PC-9 (cell line): ENCODE measurements at regions of chr7 and their contacts with region 1.

Region 1: DNA sequence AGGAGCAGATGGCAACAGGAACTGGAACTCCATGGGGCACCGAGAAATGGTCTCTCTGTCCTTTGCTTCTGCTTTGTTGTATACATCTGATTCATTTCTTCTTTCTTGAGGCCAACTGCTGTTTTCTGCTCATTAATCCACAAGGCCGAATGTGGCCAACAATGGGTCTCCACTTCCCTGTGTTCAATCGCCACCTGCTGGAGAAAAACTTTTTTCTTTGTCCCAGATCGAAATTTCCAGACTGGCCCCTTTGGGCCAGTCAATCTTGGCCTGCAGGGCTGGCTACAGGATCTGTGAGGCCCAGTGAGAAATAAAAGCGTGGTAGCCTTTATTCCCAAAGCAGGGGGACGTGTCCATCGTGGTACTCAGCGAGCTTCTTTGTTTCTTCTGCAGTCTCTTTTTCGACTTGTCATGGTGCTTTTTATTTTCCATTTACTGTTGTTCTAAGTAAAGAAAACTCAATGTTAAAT is 58.8 kb downstream of the PARP12 start:
- DNase-seq: peak in 1 of 2 experiments; percentile 25
- H3K4me3 ChIP-seq: no peak overlapping the region
- H3K27ac ChIP-seq: no peak overlapping the region
- H3K4me1 ChIP-seq: no peaks in the 10 kb centered on the region
- H3K27me3 ChIP-seq: no peaks in the 10 kb centered on the region
- CTCF ChIP-seq: peak; percentile 84

Region 2: GRCh38 chr7:139075031-139075652 is 928.8 kb before region 1 on chr7:
- CTCF ChIA-PET with region 1: no interaction called
- POLR2A ChIA-PET with region 1: no interaction called
- intact Hi-C with region 1: loop called (anchors 10 kb)
- DNase-seq: peak; percentile 55 to 61
- H3K4me3 ChIP-seq: no peak overlapping the region
- H3K27ac ChIP-seq: peak overlapping the region; percentile 25; the same call in 1 of the 2 replicates
- H3K4me1 ChIP-seq: no peaks in the 10 kb centered on the region; the same call in 1 of the 2 replicates
- H3K27me3 ChIP-seq: no peaks in the 10 kb centered on the region
- CTCF ChIP-seq: peak; percentile 93

Region 3: DNA sequence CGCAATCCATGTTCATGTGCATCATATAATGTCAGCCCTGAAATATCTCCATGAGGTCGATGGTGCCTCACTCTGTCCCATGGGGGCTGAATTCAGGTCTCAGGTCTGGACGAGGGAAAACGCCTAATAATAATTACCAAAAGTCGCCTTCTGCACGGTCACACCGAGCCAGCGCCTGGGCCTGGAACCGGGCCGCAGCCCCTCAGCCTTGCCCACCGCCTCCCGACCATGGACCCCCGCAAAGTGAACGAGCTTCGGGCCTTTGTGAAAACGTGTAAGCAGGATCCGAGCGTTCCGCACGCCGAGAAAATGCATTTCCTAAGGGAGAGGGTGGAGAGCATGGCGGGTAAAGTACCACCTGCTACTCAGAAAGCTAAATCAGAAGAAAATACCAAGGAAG is 501.7 kb before region 1 on chr7:
- CTCF ChIA-PET with region 1: interaction called, 3 read pairs
- POLR2A ChIA-PET with region 1: no interaction called
- intact Hi-C with region 1: loop called (anchors 1 kb)
- DNase-seq: no peak
- H3K4me3 ChIP-seq: no peak overlapping the region
- H3K27ac ChIP-seq: no peak overlapping the region
- H3K4me1 ChIP-seq: no peaks in the 10 kb centered on the region
- H3K27me3 ChIP-seq: no peaks in the 10 kb centered on the region
- CTCF ChIP-seq: no peak

Region 4: GRCh38 chr7:139614886-139615285 is 389.1 kb before region 1 on chr7:
- CTCF ChIA-PET with region 1: interaction called, 13 read pairs
- POLR2A ChIA-PET with region 1: no interaction called
- intact Hi-C with region 1: loop called (anchors 1 kb)
- DNase-seq: no peak
- H3K4me3 ChIP-seq: no peak overlapping the region
- H3K27ac ChIP-seq: no peak overlapping the region
- H3K4me1 ChIP-seq: no peaks in the 10 kb centered on the region
- H3K27me3 ChIP-seq: no peaks in the 10 kb centered on the region
- CTCF ChIP-seq: no peak

Region 5: DNA sequence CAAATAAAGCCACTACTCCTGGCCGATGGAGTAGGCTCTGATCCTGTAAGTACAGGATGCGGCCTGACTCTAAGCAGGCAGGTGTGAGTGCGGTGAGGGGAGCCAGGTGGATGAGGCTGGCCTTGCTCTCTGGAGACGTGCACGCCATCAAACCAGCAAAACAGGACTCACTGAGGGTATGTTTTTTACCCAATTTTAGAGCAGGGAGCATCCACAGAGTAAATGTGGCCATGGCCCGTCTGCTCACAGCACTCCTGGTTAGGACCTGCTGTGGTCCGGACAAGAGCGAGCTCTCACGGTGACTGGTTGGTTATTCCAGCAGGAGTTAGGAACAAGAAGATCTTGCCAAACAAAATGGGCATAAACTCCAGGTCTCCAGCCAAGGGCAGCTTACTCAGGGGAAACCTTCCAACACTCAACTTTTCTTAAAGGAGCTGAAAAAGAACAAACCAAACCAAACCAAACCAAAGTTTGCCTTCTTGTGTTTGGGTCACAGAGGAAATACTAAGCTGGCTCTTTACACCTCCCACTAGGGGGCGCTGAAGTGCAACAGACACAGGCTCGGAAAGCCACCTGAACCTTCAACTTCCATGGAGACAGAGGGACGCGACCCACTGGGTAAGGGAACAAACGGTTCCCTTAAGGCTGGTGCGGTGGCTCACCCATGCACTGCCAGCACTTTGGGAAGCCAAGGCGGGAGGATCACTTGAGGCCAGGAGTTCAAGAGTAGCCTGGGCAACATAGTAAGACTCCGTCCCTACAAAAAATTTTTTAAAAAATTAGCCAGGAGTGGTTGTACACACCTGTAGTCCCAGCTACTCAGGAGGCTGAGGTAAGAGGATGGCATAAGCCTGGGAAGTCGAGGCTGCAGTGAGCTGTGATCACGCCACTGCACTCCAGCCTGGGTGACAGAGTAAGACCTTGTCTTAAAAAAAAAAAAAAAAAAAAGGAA is 358.1 kb before region 1 on chr7:
- CTCF ChIA-PET with region 1: interaction called, 16 read pairs
- POLR2A ChIA-PET with region 1: no interaction called
- intact Hi-C with region 1: loop called (anchors 1 kb)
- DNase-seq: peak; percentile 56 to 73
- H3K4me3 ChIP-seq: no peak overlapping the region
- H3K27ac ChIP-seq: no peak overlapping the region
- H3K4me1 ChIP-seq: no peaks in the 10 kb centered on the region
- H3K27me3 ChIP-seq: no peaks in the 10 kb centered on the region
- CTCF ChIP-seq: peak; percentile 98

Region 6: DNA sequence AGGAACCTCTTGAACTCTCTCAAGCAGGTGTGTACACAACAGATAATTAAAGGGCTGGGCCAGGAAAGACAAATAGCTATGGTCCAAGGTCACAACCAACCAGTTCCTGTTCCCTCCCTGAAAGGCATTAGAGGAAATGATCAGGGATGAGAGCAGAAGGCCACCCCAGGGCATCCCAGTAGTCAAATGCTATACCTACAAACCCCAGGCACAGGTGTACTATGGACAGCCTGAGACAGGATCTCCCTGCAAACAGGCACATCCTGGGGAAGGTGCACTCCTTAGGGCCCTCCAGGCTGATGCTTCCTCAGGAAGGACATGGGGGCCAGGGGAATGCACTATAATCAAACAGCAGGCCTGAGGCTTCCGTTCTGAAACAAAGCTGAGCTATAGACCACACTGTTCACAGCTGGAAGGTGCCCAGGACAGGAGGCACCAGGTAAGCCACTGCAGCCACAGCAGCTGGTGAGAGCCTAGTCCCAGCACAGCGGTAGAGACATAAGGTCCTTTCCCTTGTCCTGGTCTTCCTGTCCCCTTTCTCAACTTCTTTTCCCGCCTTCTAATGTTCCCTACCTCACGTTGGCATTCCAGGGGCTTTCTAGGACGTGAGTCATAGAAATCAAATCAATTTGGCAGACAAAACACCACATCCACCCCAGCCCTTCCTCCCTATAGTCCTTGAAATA is 45.5 kb after region 1 on chr7:
- CTCF ChIA-PET with region 1: no interaction called
- POLR2A ChIA-PET with region 1: interaction called, 12 read pairs
- intact Hi-C with region 1: no loop called
- DNase-seq: peak in 1 of 2 experiments; percentile 72
- H3K4me3 ChIP-seq: no peak overlapping the region
- H3K27ac ChIP-seq: no peak overlapping the region
- H3K4me1 ChIP-seq: peaks cover 12% of the 10 kb centered on the region
- H3K27me3 ChIP-seq: no peaks in the 10 kb centered on the region
- CTCF ChIP-seq: no peak